ENCODE measurements at regions of chr7 and their contacts with region 1.

Region 1: GRCh38 chr7:112449902-112450806 is at the start of gene IFRD1:
- DNase-seq: peak; percentile 100
- H3K4me3 ChIP-seq: peak within 1 kb of the TSS; percentile 78 to 100 (median 97)
- H3K27ac ChIP-seq: peak within 1 kb of the TSS; percentile 94 to 100 (median 100)
- H3K4me1 ChIP-seq: peaks cover 0 to 45% (median 37%) of the 10 kb centered on the region in 4 donors
- H3K27me3 ChIP-seq: no peaks in the 10 kb centered on the region
- CTCF ChIP-seq: no peak
- EP300 ChIP-seq: peak in 1 of 4 donors; percentile 20
- POLR2A ChIP-seq: peak; percentile 99
- total RNA-seq, gene IFRD1: 45.7 to 63.7 (median 49.7) TPM

Region 2: GRCh38 chr7:112390167-112390566 is 60.0 kb before region 1 on chr7:
- intact Hi-C with region 1: loop called (anchors 5 kb)
- DNase-seq: no peak
- H3K4me3 ChIP-seq: no peak overlapping the region
- H3K27ac ChIP-seq: no peak overlapping the region
- H3K4me1 ChIP-seq: peaks cover 0 to 7% (median 5%) of the 10 kb centered on the region in 4 donors
- H3K27me3 ChIP-seq: no peaks in the 10 kb centered on the region
- CTCF ChIP-seq: no peak
- EP300 ChIP-seq: no peak
- POLR2A ChIP-seq: no peak

Region 3: DNA sequence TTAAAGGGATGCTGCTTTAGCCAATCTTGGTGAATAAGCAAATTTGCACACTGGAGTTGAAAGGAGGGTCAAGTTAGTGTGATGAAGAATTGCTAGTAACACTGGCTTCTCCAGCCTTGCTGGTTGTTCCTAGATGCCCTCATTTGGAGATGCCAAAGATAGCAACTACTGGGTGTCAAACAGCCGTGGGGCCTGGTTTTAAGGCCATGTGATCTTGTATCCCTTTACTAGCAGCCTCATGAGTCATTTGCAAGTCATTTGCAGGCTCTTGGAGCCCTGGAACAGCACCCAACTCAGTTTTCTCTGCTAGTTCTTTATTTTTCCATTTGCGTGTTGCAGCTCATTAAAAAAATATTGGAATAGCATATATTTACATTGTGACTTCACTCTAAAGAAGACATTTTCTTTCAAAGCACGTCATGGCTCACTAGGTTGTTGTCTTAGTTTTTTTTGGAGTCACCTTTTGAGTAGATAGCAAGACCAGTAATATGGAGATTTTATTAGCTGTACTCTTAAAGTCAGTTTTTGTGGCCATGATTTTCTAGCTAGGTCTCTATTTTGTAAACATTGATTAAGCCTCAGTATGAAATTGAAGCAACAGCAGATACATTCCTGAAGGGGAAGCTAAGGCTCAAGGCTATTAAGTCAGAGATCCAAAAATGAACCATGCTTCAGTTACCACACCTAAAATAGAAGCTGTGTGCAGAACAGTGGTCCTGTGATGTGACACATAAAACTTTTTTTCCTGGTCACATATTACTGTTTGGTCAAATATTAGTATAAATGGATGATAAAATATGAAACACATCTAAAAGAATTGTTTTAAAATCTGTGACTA is 31.9 kb after region 1 on chr7:
- intact Hi-C with region 1: loop called (anchors 2 kb)
- DNase-seq: peak; percentile 90
- H3K4me3 ChIP-seq: no peak overlapping the region
- H3K27ac ChIP-seq: peak overlapping the region; percentile 68 to 86 (median 75)
- H3K4me1 ChIP-seq: peaks cover 0 to 55% (median 53%) of the 10 kb centered on the region in 4 donors
- H3K27me3 ChIP-seq: no peaks in the 10 kb centered on the region
- CTCF ChIP-seq: no peak
- EP300 ChIP-seq: peak in 3 of 4 donors; percentile 1 to 89 (median 41)
- POLR2A ChIP-seq: no peak

Region 4: DNA sequence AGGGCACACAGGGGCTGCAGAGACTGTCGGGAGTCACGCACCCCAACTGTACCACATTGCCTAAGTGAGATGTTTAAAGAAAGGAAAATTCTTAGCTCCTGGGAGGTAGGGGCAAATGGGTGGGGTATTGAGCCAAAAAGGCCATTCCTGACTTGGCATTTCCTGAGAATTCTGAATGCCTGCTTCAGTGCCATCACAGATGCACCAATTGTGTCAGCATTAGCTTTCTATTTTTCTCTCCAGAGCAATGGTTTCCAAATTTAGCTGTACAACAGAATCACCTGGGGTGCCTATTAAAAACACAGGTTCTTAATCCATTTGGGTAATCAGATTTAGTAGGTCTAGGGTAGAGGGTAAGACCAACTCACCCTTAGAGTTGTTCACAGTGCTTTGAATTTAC is 73.7 kb after region 1 on chr7:
- intact Hi-C with region 1: no loop called
- DNase-seq: no peak
- H3K4me3 ChIP-seq: no peak overlapping the region
- H3K27ac ChIP-seq: no peak overlapping the region
- H3K4me1 ChIP-seq: no peaks in the 10 kb centered on the region
- H3K27me3 ChIP-seq: no peaks in the 10 kb centered on the region
- CTCF ChIP-seq: no peak
- EP300 ChIP-seq: no peak
- POLR2A ChIP-seq: no peak

Region 5: GRCh38 chr7:112646783-112647182 is 196.6 kb after region 1 on chr7:
- intact Hi-C with region 1: no loop called
- DNase-seq: no peak
- H3K4me3 ChIP-seq: no peak overlapping the region
- H3K27ac ChIP-seq: no peak overlapping the region
- H3K4me1 ChIP-seq: no peaks in the 10 kb centered on the region
- H3K27me3 ChIP-seq: no peaks in the 10 kb centered on the region
- CTCF ChIP-seq: no peak
- EP300 ChIP-seq: no peak
- POLR2A ChIP-seq: no peak

Measured in sigmoid colon (tissue), 7 donors.